A673 (cell line): ENCODE measurements at regions of chrX and their contacts with region 1.

Region 1: DNA sequence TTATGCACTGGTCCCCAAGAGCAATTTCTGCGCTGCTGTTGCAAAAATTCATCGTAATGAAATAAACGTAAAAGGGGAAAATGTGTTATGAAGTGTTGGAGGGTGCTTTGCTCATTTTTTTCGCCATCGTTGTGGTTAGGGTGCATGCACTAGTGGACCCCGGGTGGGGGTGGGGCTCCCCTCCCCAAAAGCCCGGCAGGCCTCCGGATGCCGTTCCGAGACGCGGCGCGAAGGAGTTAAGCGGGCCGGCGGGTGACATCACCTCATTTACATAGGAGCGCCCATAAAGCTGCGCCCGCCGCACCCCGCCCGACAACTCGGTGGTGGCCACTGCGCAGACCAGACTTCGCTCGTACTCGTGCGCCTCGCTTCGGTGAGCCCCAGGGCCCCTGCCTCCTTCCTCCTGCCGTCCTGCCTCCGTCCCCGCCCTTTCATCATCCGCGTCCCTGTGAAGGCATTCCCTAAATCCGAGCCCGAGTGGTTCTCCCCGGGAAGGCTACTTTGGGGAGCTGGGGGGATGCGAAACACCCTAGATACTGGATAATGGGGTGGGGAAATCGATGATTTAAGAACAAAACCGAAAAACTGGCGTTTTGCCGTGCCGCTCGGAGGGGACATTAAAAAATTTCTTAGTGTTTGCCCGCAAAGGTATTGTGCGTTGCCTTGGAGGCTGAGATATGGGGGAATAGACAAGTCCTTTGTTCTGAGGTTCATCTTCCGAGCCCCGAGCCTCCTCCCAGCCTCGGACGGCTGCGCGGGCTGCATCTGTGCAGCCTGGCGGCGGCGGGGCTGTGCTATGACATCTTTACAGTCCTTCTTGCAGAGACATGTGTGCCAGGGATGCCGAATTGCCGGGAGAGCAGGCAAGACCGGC is at the start of gene TMSB4X:
- DNase-seq: peak; percentile 85
- H3K4me3 ChIP-seq: peak within 1 kb of the TSS; percentile 62
- H3K27ac ChIP-seq: peak within 1 kb of the TSS; percentile 81
- H3K4me1 ChIP-seq: peaks cover 6% of the 10 kb centered on the region
- H3K27me3 ChIP-seq: no peaks in the 10 kb centered on the region
- CTCF ChIP-seq: no peak
- total RNA-seq, gene TMSB4X: 975 and 1,093 TPM in 2 replicates

Region 2: DNA sequence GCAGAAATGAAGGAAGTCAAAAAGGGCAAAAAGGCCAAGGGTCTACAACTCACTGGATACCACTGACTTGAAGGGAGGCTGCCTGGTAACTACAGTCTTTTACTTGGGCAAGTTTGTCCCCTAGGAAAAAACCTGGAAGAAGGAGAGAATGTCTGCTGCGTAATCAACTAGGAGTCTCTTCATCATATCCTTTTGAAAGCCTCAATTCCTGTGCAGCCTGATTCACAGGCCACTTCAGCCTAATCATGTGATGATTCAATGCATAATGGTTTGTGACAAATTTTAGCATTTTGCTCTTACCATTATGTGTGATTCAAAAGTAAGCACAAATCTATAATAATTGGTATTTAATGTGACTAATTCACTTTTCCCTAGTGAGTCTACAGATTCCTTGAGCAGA is 563.2 kb before region 1 on chrX:
- CTCF ChIA-PET with region 1: no interaction called
- POLR2A ChIA-PET with region 1: no interaction called
- intact Hi-C with region 1: no loop called
- DNase-seq: no peak
- H3K4me3 ChIP-seq: no peak overlapping the region
- H3K27ac ChIP-seq: no peak overlapping the region
- H3K4me1 ChIP-seq: no peaks in the 10 kb centered on the region
- H3K27me3 ChIP-seq: peaks cover 24% of the 10 kb centered on the region
- CTCF ChIP-seq: no peak

Region 3: DNA sequence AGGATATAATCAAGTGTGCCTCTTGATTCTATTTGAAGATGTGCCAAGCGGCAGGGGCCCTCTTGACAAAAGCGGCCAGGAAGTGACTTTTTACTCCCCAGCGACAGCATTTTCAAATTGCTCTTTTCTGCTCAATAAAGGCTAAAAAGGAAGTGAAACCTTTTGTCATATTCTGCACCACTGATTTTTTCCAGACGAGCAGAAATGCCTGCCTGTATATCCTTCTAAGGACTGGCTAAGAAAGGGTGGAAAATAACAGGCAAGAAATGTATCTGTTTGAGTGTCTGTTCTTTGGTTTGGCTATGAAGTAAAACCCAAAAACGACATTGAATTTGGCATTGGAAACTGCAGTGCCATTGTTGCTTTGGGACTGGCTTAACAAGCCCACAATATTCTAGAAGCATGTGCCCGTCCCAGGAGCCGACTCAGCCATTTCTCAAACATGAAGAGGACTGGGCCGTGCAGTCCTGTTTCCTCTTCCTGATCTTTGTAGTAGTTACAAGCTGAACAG is 25.3 kb after region 1 on chrX:
- CTCF ChIA-PET with region 1: no interaction called
- POLR2A ChIA-PET with region 1: no interaction called
- intact Hi-C with region 1: loop called (anchors 1 kb)
- DNase-seq: peak; percentile 87
- H3K4me3 ChIP-seq: no peak overlapping the region
- H3K27ac ChIP-seq: peak overlapping the region; percentile 44
- H3K4me1 ChIP-seq: peaks cover 17% of the 10 kb centered on the region
- H3K27me3 ChIP-seq: peaks cover 12% of the 10 kb centered on the region
- CTCF ChIP-seq: no peak

Region 4: DNA sequence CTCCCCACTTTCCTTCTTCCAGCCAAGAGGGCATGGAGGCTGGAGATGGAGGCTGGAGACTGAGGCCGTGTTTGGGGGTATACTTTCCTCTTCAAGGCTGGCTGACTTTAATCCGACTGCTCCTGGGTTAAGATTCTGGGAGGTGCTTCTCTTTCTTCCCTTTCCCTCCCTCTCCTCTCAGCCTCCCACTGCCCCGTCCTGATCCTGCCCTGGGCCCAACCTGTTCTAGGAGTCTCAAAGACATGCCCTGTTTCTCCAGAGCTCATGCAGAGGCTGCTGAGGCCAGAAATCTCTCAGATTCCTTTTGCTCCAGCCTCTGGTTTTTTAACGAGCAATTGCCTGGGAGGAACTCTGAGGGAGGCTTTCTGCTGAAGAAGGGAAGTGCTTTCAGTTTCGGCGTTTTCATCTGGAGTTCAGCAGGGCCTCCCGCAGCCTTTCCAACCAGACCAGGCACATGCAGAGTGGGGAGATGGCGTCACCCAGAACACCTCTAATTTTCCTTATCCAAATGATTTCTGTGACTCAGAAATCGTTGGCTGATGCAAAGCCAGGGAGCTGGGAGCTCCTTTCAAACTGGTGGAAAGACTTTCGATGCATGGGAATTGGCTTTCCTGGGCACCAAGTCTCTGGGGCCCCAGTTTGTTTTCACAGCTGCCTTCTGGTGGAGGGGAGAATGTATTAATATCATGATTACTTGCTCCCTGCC is 103.9 kb after region 1 on chrX:
- CTCF ChIA-PET with region 1: no interaction called
- POLR2A ChIA-PET with region 1: no interaction called
- intact Hi-C with region 1: no loop called
- DNase-seq: no peak
- H3K4me3 ChIP-seq: no peak overlapping the region
- H3K27ac ChIP-seq: no peak overlapping the region
- H3K4me1 ChIP-seq: no peaks in the 10 kb centered on the region
- H3K27me3 ChIP-seq: no peaks in the 10 kb centered on the region
- CTCF ChIP-seq: no peak

Region 5: DNA sequence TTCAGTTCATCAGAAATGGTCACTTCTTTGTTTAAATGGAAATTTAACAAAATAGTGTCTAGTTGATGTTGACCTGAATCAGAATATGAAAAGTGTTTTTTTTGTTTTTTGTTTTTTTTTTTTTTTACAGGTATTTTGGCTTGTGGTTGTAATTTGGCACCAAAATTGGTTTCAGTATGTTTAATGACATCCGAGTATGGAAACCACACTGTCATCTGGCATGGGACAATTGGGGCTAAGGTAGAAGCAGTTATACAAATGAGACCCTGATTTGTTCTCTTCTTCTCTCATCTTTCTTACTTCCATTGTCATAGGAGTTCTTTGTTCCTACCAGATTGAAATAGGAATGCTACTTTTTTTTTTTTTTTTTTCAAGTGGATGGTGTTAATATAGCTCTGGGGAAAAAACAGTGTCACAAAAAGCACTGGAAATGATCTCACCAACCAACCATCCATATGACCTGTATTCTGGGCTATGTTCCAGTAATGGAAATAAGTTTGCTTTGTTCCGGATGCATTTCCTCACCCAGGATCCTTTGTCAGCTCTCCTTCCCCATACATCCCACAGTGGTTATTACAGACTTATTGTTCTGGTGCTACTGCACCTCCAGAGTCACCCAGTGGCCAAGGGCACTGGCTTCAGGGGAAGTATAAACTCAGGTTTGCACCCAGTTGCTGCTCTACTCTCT is 249.0 kb after region 1 on chrX:
- CTCF ChIA-PET with region 1: no interaction called
- POLR2A ChIA-PET with region 1: no interaction called
- intact Hi-C with region 1: loop called (anchors 10 kb)
- DNase-seq: peak; percentile 89
- H3K4me3 ChIP-seq: no peak overlapping the region
- H3K27ac ChIP-seq: no peak overlapping the region
- H3K4me1 ChIP-seq: no peaks in the 10 kb centered on the region
- H3K27me3 ChIP-seq: no peaks in the 10 kb centered on the region
- CTCF ChIP-seq: no peak